ENCODE measurements at regions of chr9 and their contacts with region 1.

Region 1: GRCh38 chr9:114869845-114870244 is 60.5 kb downstream of the TNFSF8 start:
- DNase-seq: peak in 1 of 2 donors; percentile 31
- ATAC-seq: no peak
- H3K4me3 ChIP-seq: no peak overlapping the region
- H3K4me3 Mint-ChIP-seq: peak overlapping the region; percentile 31
- H3K27ac ChIP-seq: no peak overlapping the region
- H3K27ac Mint-ChIP-seq: peak overlapping the region; percentile 46 to 68
- H3K4me1 ChIP-seq: peaks cover 15% of the 10 kb centered on the region
- H3K4me1 Mint-ChIP-seq: peaks cover 11 to 19% of the 10 kb centered on the region in 2 donors
- H3K27me3 ChIP-seq: no peaks in the 10 kb centered on the region
- H3K27me3 Mint-ChIP-seq: no peaks in the 10 kb centered on the region
- CTCF ChIP-seq: no peak

Region 2: GRCh38 chr9:114592356-114592755 is 277.5 kb before region 1 on chr9:
- intact Hi-C with region 1: no loop called
- DNase-seq: peak in 1 of 2 donors; percentile 86
- ATAC-seq: peak; percentile 23 to 39 (median 27)
- H3K4me3 ChIP-seq: no peak overlapping the region
- H3K4me3 Mint-ChIP-seq: peak overlapping the region; percentile 83
- H3K27ac ChIP-seq: peak overlapping the region; percentile 45
- H3K27ac Mint-ChIP-seq: peak overlapping the region; percentile 83 to 89
- H3K4me1 ChIP-seq: peaks cover 38% of the 10 kb centered on the region
- H3K4me1 Mint-ChIP-seq: peaks cover 60 to 61% of the 10 kb centered on the region in 2 donors
- H3K27me3 ChIP-seq: no peaks in the 10 kb centered on the region
- H3K27me3 Mint-ChIP-seq: no peaks in the 10 kb centered on the region
- CTCF ChIP-seq: peak; percentile 39

Region 3: DNA sequence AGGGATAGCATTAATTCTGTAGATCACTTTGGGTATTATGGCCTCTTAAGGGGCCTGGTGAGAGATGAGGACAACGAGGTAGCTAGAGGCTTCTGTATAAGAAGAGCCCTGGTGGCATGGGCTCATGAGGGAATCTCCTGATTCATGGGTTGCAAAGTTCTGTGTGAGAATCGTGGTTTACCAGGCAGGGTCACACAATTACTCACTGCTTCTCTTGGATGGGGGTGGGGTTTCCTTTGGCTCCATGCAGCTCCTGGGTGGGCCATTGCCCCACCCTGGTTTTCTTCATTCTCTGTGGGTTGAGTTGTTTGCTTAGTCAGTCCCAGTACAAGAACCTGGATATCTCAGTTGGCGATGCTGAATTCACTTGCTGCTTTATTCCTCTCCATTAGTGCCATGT is 33.1 kb before region 1 on chr9:
- intact Hi-C with region 1: loop called (anchors 1 kb)
- DNase-seq: no peak
- ATAC-seq: peak in 1 of 3 donors; percentile 42
- H3K4me3 ChIP-seq: no peak overlapping the region
- H3K4me3 Mint-ChIP-seq: no peak overlapping the region
- H3K27ac ChIP-seq: no peak overlapping the region
- H3K27ac Mint-ChIP-seq: no peak overlapping the region
- H3K4me1 ChIP-seq: no peaks in the 10 kb centered on the region
- H3K4me1 Mint-ChIP-seq: peaks cover 7 to 8% of the 10 kb centered on the region in 2 donors
- H3K27me3 ChIP-seq: no peaks in the 10 kb centered on the region
- H3K27me3 Mint-ChIP-seq: peaks cover 7 to 20% of the 10 kb centered on the region in 2 donors
- CTCF ChIP-seq: no peak

Measured in natural killer cell (primary cell).